ENCODE measurements at regions of chr4 and their contacts with region 1.

Region 1: GRCh38 chr4:88706574-88706973 is 8.9 kb upstream of the NAP1L5 start:
- DNase-seq: peak in 3 of 5 donors; percentile 19 to 61 (median 28)
- ATAC-seq: peak; percentile 77 to 93 (median 88)
- H3K4me3 ChIP-seq: no peak overlapping the region
- H3K27ac ChIP-seq: peak overlapping the region in 6 of 12 donors; percentile 8 to 61 (median 38)
- H3K4me1 ChIP-seq: peaks cover 0 to 13% (median 2%) of the 10 kb centered on the region in 12 donors
- H3K27me3 ChIP-seq: no peaks in the 10 kb centered on the region
- CTCF ChIP-seq: peak; percentile 35 to 72 (median 56)
- POLR2A ChIP-seq: no peak

Region 2: GRCh38 chr4:88284439-88285234 is 421.9 kb before region 1 on chr4 and contains the start of gene PPM1K:
- intact Hi-C with region 1: no loop called
- DNase-seq: peak; percentile 100
- ATAC-seq: peak; percentile 95 to 98 (median 96)
- H3K4me3 ChIP-seq: peak within 1 kb of the TSS; percentile 61 to 98 (median 80)
- H3K27ac ChIP-seq: peak within 1 kb of the TSS; percentile 94 to 99 (median 96)
- H3K4me1 ChIP-seq: peaks cover 0 to 37% (median 11%) of the 10 kb centered on the region in 12 donors
- H3K27me3 ChIP-seq: no peaks in the 10 kb centered on the region
- CTCF ChIP-seq: peak in 6 of 12 donors; percentile 8 to 47 (median 22)
- POLR2A ChIP-seq: peak; percentile 20 to 94
- total RNA-seq, gene PPM1K: 140 to 332 (median 245) TPM

Region 3: DNA sequence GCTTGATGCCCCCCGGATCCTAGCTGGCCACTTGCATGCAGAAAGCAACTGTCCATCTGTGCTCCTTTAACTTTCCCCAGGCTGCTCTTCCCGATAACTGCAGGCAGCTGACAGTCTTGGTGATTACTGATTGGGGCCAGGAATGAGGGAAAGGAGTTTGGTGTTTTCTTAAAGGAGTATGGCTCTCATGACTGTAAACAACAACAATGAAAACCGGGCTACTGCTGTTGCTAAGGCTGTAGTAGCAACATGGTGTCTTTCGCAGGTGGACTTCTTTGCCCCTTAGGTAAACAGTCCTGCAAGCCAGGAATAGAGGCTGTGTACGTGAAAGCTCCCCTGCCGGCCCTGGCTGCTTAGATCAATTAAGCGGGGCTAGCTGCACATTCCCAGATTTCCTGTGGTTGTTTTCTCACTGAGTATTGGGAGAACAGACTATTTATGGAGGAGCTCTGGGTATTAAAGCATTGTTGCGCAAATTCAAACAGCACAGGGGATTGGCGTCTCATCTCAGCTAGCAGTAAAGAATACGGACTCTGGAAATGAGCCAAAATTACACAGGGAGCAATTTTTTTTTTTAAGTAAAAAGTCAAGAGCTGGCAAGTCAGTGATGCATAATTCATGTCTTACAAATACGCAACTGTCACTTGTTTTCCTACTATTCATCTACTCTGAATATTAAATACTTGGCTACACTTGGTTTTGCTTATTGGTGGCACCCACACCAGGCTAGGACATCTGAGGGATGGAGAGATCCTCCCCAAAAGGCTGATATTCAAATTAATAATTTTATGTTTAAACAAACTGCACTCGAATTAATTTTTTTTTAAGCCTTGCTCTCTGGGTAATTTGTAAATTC is 52.7 kb after region 1 on chr4:
- intact Hi-C with region 1: loop called in 2 of 10 experiments (anchors 5 to 10 kb)
- DNase-seq: no peak
- ATAC-seq: peak; percentile 28 to 63 (median 52)
- H3K4me3 ChIP-seq: peak overlapping the region in 9 of 12 donors; percentile 6 to 45 (median 30)
- H3K27ac ChIP-seq: peak overlapping the region in 10 of 12 donors; percentile 4 to 49 (median 15)
- H3K4me1 ChIP-seq: peaks cover 0 to 37% (median 22%) of the 10 kb centered on the region in 12 donors
- H3K27me3 ChIP-seq: no peaks in the 10 kb centered on the region
- CTCF ChIP-seq: no peak
- POLR2A ChIP-seq: no peak

Region 4: GRCh38 chr4:88765729-88766128 is 59.2 kb after region 1 on chr4:
- intact Hi-C with region 1: loop called in 2 of 10 experiments (anchors 5 to 10 kb)
- DNase-seq: peak; percentile 50 to 77 (median 64)
- ATAC-seq: peak; percentile 95 to 100 (median 98)
- H3K4me3 ChIP-seq: no peak overlapping the region
- H3K27ac ChIP-seq: peak overlapping the region in 11 of 12 donors; percentile 5 to 69 (median 32)
- H3K4me1 ChIP-seq: peaks cover 0 to 17% (median 5%) of the 10 kb centered on the region in 12 donors
- H3K27me3 ChIP-seq: no peaks in the 10 kb centered on the region
- CTCF ChIP-seq: no peak
- POLR2A ChIP-seq: no peak

Region 5: DNA sequence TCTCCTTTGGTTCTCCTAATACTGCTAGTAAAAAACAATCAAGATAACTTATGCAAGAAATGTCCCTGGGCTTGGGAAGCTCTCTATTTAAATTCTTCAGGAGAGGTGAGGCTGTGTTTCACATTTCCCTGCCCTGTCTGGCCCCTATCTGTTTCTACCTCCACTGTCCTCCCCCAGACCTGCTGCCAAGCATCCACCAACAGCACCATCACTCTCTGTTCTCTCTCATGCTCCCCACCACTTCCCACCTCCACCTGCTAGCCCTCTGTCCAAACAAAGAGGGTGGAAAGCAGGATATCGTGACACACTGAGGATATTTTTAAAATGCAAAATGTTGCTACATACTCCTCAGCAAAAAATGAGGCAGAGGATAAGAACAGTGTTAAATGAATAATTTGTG is 79.4 kb after region 1 on chr4:
- intact Hi-C with region 1: loop called in 5 of 10 experiments (anchors 5 to 10 kb)
- DNase-seq: no peak
- ATAC-seq: no peak
- H3K4me3 ChIP-seq: no peak overlapping the region
- H3K27ac ChIP-seq: no peak overlapping the region
- H3K4me1 ChIP-seq: no peaks in the 10 kb centered on the region
- H3K27me3 ChIP-seq: no peaks in the 10 kb centered on the region
- CTCF ChIP-seq: no peak
- POLR2A ChIP-seq: no peak

Region 6: GRCh38 chr4:88792268-88792781 is 85.8 kb after region 1 on chr4:
- intact Hi-C with region 1: loop called in 7 of 10 experiments (anchors 2 to 10 kb)
- DNase-seq: no peak
- ATAC-seq: no peak
- H3K4me3 ChIP-seq: no peak overlapping the region
- H3K27ac ChIP-seq: no peak overlapping the region
- H3K4me1 ChIP-seq: peaks cover 0 to 19% (median 0%) of the 10 kb centered on the region in 12 donors
- H3K27me3 ChIP-seq: no peaks in the 10 kb centered on the region
- CTCF ChIP-seq: no peak
- POLR2A ChIP-seq: no peak

Region 7: DNA sequence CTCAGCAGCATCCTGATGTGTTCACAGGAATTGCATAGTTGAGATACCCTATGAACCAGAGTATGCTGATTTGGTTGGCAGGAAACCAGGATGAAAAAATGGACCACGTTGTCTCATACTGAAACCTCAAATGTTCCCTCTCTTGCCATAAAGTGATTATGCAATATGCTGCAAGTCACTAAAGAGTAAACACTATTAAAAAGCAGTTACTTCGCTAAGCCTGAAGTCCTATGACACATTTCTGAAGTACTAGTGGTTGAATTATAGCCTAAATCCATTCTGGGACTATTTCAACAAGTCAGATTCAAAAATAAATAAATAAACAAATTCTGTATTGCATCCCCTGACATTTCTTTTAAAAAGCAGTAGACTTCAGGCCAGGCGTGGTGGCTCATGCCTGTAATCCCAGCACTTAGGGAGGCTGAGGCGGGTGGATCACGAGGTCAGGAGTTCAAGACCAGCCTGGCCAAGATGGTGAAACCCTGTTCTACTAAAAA is 97.1 kb after region 1 on chr4:
- intact Hi-C with region 1: loop called in 3 of 10 experiments (anchors 5 to 10 kb)
- DNase-seq: peak in 3 of 5 donors; percentile 15 to 29 (median 20)
- ATAC-seq: peak; percentile 49 to 85 (median 82)
- H3K4me3 ChIP-seq: no peak overlapping the region
- H3K27ac ChIP-seq: peak overlapping the region in 7 of 12 donors; percentile 23 to 74 (median 29)
- H3K4me1 ChIP-seq: peaks cover 0 to 42% (median 17%) of the 10 kb centered on the region in 12 donors
- H3K27me3 ChIP-seq: no peaks in the 10 kb centered on the region
- CTCF ChIP-seq: no peak
- POLR2A ChIP-seq: no peak

Region 8: DNA sequence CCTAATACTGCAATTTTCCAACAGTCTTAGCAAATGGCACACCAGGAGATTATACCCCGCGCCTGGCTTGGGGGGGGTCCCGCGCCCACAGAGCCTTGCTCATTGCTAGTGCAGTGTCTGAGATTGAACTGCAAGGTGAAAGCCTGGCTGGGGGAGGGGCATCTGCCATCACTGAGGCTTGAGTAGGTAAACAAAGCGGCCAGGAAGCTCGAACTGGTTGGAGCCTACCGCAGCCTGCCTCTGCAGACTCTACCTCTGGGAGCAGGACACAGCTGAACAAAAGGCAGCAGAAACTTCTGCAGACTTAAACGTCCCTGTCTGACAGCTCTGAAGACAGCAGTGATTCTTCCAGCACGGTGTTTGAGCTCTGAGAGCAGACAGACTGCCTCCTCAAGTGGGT is 163.9 kb after region 1 on chr4:
- intact Hi-C with region 1: no loop called
- DNase-seq: no peak
- ATAC-seq: no peak
- H3K4me3 ChIP-seq: no peak overlapping the region
- H3K27ac ChIP-seq: no peak overlapping the region
- H3K4me1 ChIP-seq: no peaks in the 10 kb centered on the region
- H3K27me3 ChIP-seq: no peaks in the 10 kb centered on the region
- CTCF ChIP-seq: no peak
- POLR2A ChIP-seq: no peak

Region 9: GRCh38 chr4:89024051-89024675 is 317.6 kb after region 1 on chr4:
- intact Hi-C with region 1: loop called in 9 of 10 experiments (anchors 1 to 5 kb)
- DNase-seq: peak in 3 of 5 donors; percentile 42 to 62 (median 44)
- ATAC-seq: peak; percentile 92 to 96 (median 96)
- H3K4me3 ChIP-seq: no peak overlapping the region
- H3K27ac ChIP-seq: no peak overlapping the region
- H3K4me1 ChIP-seq: peaks cover 0 to 20% (median 4%) of the 10 kb centered on the region in 12 donors
- H3K27me3 ChIP-seq: no peaks in the 10 kb centered on the region
- CTCF ChIP-seq: peak; percentile 71 to 94 (median 84)
- POLR2A ChIP-seq: no peak